Mammary epithelial cell (primary cell): ENCODE measurements at regions of chr11 and their contacts with region 1.

Region 1: DNA sequence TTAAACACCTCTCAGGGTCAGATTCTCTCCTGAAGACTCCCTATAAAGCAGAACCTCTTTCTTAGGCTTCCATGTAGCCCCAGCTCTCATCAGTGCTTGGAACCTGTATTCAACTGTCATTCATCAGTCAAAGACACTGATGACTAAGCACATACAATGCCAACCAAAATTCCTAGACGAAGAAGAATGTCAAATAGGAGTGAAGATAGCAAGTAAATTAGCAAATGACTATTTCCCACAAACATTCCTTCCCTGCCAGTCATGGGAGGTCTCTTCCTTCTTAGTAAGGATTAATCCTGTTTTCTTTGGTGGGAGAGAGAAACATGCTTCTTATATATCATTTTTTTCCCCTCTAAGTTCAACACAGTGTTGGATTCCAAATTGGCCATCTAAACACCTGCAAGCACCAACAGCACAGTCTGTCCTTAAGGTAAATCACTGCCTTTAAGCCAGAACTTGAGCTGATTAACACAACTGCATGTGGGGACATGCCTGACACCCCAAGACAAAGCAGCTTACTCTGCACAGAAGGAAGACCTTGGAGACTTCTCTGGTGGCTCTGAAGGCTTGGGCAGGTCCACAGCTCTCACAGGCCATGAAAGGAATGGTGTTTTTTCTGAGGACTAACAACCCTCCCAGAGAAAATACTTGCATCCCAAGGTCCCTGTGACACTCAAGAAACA is 47.5 kb upstream of the ME3 start:
- DNase-seq: peak; percentile 87
- H3K4me3 ChIP-seq: no peak overlapping the region
- H3K27ac ChIP-seq: peak overlapping the region; percentile 33
- H3K4me1 ChIP-seq: peaks cover 57% of the 10 kb centered on the region
- H3K27me3 ChIP-seq: no peaks in the 10 kb centered on the region
- CTCF ChIP-seq: no peak

Region 2: GRCh38 chr11:86632499-86633269 is 87.2 kb before region 1 on chr11:
- CTCF ChIA-PET with region 1: no interaction called
- dilution Hi-C with region 1: no loop called
- in situ Hi-C with region 1: no loop called
- intact Hi-C with region 1: loop called (anchors 2 kb)
- DNase-seq: peak; percentile 93
- H3K4me3 ChIP-seq: no peak overlapping the region
- H3K27ac ChIP-seq: peak overlapping the region; percentile 60
- H3K4me1 ChIP-seq: peaks cover 18% of the 10 kb centered on the region
- H3K27me3 ChIP-seq: no peaks in the 10 kb centered on the region
- CTCF ChIP-seq: peak in 1 of 2 donors; percentile 53

Region 3: DNA sequence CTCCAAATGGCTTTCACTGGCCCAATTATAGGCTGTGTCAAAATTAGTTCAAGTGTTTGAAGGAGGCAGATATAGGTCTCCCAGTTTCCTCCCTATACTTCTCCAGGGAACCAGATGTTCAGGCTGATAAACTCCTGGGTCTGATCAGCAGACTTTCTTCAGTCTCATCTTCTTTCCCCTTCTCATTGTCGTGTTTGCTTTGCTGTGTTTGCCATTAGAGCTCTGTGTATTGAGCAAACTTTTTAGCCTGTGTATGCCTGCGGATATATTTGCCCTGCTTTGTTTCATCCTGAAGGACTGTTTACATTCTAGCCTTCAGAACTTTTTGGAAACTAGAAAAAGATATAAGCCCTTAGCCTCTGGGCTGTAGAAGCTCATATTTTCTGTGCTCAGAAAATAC is 13.6 kb before region 1 on chr11:
- CTCF ChIA-PET with region 1: no interaction called
- dilution Hi-C with region 1: no loop called
- in situ Hi-C with region 1: no loop called
- intact Hi-C with region 1: no loop called
- DNase-seq: no peak
- H3K4me3 ChIP-seq: no peak overlapping the region
- H3K27ac ChIP-seq: no peak overlapping the region
- H3K4me1 ChIP-seq: peaks cover 6% of the 10 kb centered on the region
- H3K27me3 ChIP-seq: no peaks in the 10 kb centered on the region
- CTCF ChIP-seq: no peak

Region 4: GRCh38 chr11:87037450-87038234 is 317.7 kb after region 1 on chr11 and contains the start of gene TMEM135:
- CTCF ChIA-PET with region 1: no interaction called
- dilution Hi-C with region 1: no loop called
- in situ Hi-C with region 1: no loop called
- intact Hi-C with region 1: no loop called
- DNase-seq: peak; percentile 92
- H3K4me3 ChIP-seq: peak within 1 kb of the TSS; percentile 75 to 91 (median 85)
- H3K27ac ChIP-seq: peak within 1 kb of the TSS; percentile 65
- H3K4me1 ChIP-seq: peaks cover 14% of the 10 kb centered on the region
- H3K27me3 ChIP-seq: no peaks in the 10 kb centered on the region
- CTCF ChIP-seq: peak in 1 of 2 donors; percentile 18
- total RNA-seq, gene TMEM135: 30.8 to 37.3 TPM